ENCODE measurements at regions of chr19 and their contacts with region 1.

Region 1: GRCh38 chr19:17385878-17386611 is 8.0 kb downstream of the CCDC194 start:
- DNase-seq: peak; percentile 66
- H3K4me3 ChIP-seq: no peak overlapping the region
- H3K27ac ChIP-seq: no peak overlapping the region
- H3K4me1 ChIP-seq: peaks cover 5% of the 10 kb centered on the region; the same call in 1 of the 2 replicates
- H3K27me3 ChIP-seq: no peaks in the 10 kb centered on the region; the same call in 1 of the 2 replicates

Region 2: DNA sequence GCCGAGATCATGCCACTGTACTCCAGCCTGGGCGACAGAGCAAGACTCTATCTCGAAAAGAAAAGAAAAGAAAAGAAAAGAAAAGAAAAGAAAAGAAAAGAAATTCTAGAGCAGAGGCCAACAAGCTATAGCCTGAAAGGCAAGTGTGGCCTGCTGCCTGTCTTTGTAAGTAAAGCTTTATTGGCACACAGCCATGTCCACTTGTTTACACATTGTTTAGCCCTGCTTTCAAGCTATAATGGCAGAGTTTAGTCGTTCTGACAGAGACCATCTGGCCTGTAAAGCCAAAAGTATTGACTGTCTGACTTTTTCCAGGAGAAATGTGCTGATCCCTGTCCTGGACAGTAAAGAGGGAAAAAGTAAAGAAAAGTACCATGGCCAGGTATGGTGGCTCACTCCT is 648.1 kb before region 1 on chr19:
- in situ Hi-C with region 1: no loop called
- DNase-seq: no peak
- H3K4me3 ChIP-seq: no peak overlapping the region
- H3K27ac ChIP-seq: no peak overlapping the region
- H3K4me1 ChIP-seq: no peaks in the 10 kb centered on the region
- H3K27me3 ChIP-seq: no peaks in the 10 kb centered on the region

Region 3: GRCh38 chr19:17305517-17306284 is 80.3 kb before region 1 on chr19 and contains the start of gene MRPL34:
- in situ Hi-C with region 1: loop called (anchors 10 kb)
- DNase-seq: peak; percentile 98
- H3K4me3 ChIP-seq: peak within 1 kb of the TSS; percentile 87
- H3K27ac ChIP-seq: peak within 1 kb of the TSS; percentile 58
- H3K4me1 ChIP-seq: peaks cover 28% of the 10 kb centered on the region
- H3K27me3 ChIP-seq: no peaks in the 10 kb centered on the region
- total RNA-seq, gene MRPL34: 14.7 and 23.0 TPM in 2 replicates

Region 4: DNA sequence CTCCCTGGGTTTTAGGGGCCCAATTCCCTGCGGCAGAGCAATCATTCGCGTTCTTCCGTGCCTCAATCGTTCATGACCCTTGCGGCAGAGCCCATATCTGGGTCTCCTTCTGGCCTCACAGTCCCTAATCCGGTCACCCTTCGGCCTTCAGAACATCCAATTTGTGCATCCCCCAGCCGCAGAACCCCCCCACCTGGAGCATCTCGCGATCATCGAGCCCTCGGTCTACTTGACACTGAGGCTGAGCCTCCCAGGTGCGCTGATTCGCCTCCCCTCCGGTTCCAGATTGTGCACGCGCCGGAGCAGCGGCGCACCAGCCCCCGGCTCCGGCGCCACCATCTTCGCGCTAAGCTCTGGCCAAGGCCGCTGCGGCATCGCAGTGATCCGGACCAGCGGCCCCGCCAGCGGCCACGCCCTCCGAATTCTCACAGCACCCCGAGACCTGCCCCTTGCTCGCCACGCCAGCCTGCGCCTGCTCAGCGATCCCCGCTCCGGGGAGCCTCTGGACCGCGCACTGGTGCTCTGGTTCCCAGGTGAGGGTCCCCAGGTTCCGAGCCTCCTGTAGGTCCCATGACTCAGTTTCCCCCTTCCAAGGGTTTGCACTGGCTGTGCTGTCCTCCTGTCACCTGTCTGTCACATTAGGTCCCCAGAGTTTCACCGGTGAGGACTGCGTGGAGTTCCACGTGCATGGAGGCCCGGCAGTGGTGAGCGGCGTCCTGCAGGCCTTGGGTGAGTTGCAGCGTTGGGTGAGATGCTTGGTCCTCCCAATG is 48.1 kb before region 1 on chr19:
- in situ Hi-C with region 1: no loop called
- DNase-seq: peak; percentile 70
- H3K4me3 ChIP-seq: peak overlapping the region; percentile 89
- H3K27ac ChIP-seq: peak overlapping the region; percentile 15; the same call in 1 of the 2 replicates
- H3K4me1 ChIP-seq: peaks cover 7% of the 10 kb centered on the region; the same call in 1 of the 2 replicates
- H3K27me3 ChIP-seq: no peaks in the 10 kb centered on the region

Region 5: DNA sequence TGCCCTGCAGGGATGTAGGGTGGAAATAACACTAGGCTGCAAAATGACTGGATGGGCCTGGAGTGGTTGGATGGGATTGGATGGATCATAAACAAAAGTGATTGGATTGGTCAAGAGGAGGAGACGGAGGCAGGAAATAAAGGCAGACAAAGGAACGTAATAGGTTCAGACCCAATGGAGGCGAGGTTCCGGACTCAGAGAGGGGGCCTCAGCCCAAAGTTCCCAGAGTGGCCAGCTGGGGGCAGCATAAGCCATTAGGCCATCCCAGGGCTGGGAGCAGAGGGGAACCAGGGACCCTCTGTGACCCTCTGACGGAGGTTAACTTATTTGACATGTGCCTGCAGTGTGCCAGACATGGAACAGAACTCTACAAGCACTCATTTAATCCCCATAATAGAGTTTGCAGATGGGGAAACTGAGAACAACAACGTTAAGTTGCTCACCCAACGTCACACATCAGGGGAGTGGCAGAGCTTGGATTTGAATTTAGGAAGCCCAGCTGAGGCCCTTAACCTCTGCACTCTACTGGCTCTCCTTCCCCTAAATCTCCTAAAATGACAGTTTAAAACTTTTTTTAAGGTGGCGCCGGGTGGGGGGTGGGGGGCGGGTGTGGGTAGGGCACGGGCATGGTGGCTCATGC is 317.9 kb after region 1 on chr19:
- in situ Hi-C with region 1: no loop called
- DNase-seq: peak; percentile 63
- H3K4me3 ChIP-seq: no peak overlapping the region
- H3K27ac ChIP-seq: no peak overlapping the region
- H3K4me1 ChIP-seq: no peaks in the 10 kb centered on the region
- H3K27me3 ChIP-seq: peaks cover 8% of the 10 kb centered on the region; the same call in 1 of the 2 replicates

Region 6: DNA sequence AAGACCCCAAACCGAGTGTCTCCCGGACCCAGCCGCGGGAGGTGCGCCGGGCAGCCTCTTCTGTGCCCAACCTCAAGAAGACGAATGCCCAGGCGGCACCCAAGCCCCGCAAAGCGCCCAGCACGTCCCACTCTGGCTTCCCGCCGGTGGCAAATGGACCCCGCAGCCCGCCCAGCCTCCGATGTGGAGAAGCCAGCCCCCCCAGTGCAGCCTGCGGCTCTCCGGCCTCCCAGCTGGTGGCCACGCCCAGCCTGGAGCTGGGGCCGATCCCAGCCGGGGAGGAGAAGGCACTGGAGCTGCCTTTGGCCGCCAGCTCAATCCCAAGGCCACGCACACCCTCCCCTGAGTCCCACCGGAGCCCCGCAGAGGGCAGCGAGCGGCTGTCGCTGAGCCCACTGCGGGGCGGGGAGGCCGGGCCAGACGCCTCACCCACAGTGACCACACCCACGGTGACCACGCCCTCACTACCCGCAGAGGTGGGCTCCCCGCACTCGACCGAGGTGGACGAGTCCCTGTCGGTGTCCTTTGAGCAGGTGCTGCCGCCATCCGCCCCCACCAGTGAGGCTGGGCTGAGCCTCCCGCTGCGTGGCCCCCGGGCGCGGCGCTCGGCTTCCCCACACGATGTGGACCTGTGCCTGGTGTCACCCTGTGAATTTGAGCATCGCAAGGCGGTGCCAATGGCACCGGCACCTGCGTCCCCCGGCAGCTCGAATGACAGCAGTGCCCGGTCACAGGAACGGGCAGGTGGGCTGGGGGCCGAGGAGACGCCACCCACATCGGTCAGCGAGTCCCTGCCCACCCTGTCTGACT is 341.1 kb after region 1 on chr19:
- in situ Hi-C with region 1: no loop called
- DNase-seq: no peak
- H3K4me3 ChIP-seq: no peak overlapping the region
- H3K27ac ChIP-seq: no peak overlapping the region
- H3K4me1 ChIP-seq: peaks cover 3% of the 10 kb centered on the region
- H3K27me3 ChIP-seq: no peaks in the 10 kb centered on the region